Astrocyte of the cerebellum (primary cell): ENCODE measurements at regions of chr1 and their contacts with region 1.

Region 1: GRCh38 chr1:212981571-212982328 is 31.4 kb downstream of the VASH2 start:
- DNase-seq: no peak
- H3K4me3 ChIP-seq: no peak overlapping the region
- CTCF ChIP-seq: no peak

Region 2: GRCh38 chr1:212827824-212828278 is 153.9 kb before region 1 on chr1:
- in situ Hi-C with region 1: no loop called
- DNase-seq: no peak
- H3K4me3 ChIP-seq: no peak overlapping the region
- CTCF ChIP-seq: no peak

Region 3: DNA sequence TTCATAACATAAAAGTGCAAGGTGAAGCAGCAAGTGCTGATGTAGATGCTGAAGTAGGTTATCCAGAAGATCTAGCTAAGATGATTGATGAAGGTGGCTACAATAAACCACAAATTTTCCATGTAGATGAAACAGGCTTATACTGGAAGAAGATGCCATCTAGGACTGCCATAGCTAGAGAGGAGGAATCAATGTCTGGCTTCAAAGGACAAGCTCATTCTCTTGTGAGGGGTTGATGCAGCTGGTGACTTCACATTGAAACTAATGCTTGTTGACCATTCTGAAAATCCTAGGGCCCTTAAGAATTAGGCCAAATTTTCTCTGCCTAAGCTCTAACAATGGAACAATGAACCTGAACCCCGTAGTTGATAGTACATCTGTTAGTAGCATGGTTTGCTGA is 89.6 kb before region 1 on chr1:
- in situ Hi-C with region 1: loop called (anchors 5 kb)
- DNase-seq: no peak
- H3K4me3 ChIP-seq: no peak overlapping the region
- CTCF ChIP-seq: no peak

Region 4: DNA sequence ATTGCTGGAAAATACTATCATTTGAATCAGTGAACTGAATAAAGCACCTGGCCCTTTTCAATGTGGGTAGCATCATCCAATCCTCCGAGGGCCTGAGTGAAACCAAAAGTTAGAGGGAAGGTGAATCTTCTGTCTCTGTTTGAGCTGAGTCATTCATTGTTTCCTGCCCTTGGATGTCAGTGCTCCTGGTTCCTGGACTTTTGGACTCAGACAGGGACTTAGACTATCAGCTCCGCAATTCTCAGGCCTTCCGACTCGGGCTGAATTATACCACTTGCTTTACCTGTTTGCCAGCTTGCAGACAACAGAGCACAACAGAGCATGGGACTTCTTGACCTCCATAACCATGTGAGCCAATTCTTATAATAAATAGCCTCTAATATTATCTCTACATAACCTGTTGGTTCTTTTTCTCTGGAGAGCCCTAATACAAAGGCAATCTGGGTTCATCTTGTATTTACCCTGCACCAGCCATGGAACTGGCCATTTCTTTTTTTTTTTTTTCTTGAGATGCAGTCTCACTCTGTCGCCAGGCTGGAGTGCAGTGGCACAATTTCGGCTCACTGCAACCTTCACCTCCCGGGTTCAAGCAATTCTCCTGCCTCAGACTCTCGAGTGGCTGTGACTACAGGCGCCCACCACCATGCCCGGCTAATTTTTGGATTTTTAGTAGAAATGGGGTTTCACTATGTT is 50.6 kb before region 1 on chr1:
- in situ Hi-C with region 1: loop called (anchors 5 kb)
- DNase-seq: no peak
- H3K4me3 ChIP-seq: no peak overlapping the region
- CTCF ChIP-seq: no peak

Region 5: GRCh38 chr1:213051127-213051880 is 69.6 kb after region 1 on chr1 and contains the start of gene RPS6KC1:
- in situ Hi-C with region 1: no loop called
- DNase-seq: peak; percentile 38
- H3K4me3 ChIP-seq: peak within 1 kb of the TSS; percentile 97
- CTCF ChIP-seq: peak; percentile 15